WTC11 (cell line): ENCODE measurements at regions of chr3 and their contacts with region 1.

Region 1: GRCh38 chr3:128845778-128846485 is 33.5 kb upstream of the ACAD9 start:
- DNase-seq: peak; percentile 96
- ATAC-seq: peak; percentile 92
- H3K4me3 Mint-ChIP-seq: peak overlapping the region; percentile 60
- H3K27ac Mint-ChIP-seq: no peak overlapping the region; the same call in 1 of the 2 replicates
- H3K4me1 Mint-ChIP-seq: peaks cover 24% of the 10 kb centered on the region
- H3K27me3 Mint-ChIP-seq: peaks cover 12% of the 10 kb centered on the region
- CTCF ChIP-seq: peak; percentile 51; the same call in 1 of the 2 replicates

Region 2: DNA sequence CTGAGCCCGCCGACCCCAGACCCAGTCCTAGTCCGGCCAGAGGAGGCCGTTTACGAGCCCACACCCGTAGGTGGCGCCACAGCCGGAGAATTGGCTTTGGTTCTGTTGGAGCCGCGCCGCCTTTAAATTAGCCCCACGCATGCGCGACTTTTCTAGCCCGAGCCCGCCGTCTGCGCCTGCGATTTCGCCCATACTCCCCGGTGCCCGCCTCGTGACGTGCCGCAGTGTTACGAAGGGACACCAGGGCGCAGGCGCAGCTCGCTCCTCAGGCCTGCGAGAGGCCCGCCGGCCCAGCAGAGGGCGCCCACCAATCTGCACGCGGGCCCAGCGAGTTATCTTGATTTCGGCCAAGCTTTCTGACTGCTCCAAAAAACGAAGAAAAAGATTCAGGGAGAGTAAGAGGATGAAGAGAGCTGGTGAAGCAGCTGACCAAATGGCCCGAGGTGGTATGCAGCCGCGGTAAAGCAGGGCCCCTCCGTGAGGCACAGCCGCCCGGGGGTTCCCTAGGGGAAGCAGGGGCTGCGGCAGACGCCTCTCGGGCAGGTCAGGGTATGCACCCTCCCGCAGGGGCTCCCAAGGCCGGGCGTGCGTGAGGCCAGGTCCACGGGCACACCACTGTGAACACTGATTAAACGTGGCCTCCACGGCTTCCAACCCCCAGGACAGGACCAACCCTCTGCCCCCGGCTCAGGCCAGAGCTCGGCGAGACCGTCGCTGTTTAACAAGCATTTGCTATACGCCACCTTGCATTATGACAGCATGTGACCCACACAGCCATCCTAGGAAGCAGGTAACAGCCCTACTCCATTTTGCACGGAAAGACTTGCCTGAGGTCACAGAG is 228.2 kb before region 1 on chr3:
- CTCF ChIA-PET with region 1: interaction called, 15 read pairs
- POLR2A ChIA-PET with region 1: no interaction called
- DNase-seq: peak; percentile 98
- ATAC-seq: peak; percentile 91
- H3K4me3 Mint-ChIP-seq: peak overlapping the region; percentile 91
- H3K27ac Mint-ChIP-seq: peak overlapping the region; percentile 89
- H3K4me1 Mint-ChIP-seq: peaks cover 14% of the 10 kb centered on the region
- H3K27me3 Mint-ChIP-seq: no peaks in the 10 kb centered on the region
- CTCF ChIP-seq: peak; percentile 75; the same call in 1 of the 2 replicates

Region 3: GRCh38 chr3:128787256-128788240 is 58.4 kb before region 1 on chr3:
- CTCF ChIA-PET with region 1: interaction called, 10 read pairs
- POLR2A ChIA-PET with region 1: no interaction called
- DNase-seq: peak; percentile 50
- ATAC-seq: peak; percentile 70
- H3K4me3 Mint-ChIP-seq: no peak overlapping the region
- H3K27ac Mint-ChIP-seq: no peak overlapping the region; the same call in 1 of the 2 replicates
- H3K4me1 Mint-ChIP-seq: peaks cover 56% of the 10 kb centered on the region
- H3K27me3 Mint-ChIP-seq: no peaks in the 10 kb centered on the region
- CTCF ChIP-seq: peak; percentile 58

Region 4: DNA sequence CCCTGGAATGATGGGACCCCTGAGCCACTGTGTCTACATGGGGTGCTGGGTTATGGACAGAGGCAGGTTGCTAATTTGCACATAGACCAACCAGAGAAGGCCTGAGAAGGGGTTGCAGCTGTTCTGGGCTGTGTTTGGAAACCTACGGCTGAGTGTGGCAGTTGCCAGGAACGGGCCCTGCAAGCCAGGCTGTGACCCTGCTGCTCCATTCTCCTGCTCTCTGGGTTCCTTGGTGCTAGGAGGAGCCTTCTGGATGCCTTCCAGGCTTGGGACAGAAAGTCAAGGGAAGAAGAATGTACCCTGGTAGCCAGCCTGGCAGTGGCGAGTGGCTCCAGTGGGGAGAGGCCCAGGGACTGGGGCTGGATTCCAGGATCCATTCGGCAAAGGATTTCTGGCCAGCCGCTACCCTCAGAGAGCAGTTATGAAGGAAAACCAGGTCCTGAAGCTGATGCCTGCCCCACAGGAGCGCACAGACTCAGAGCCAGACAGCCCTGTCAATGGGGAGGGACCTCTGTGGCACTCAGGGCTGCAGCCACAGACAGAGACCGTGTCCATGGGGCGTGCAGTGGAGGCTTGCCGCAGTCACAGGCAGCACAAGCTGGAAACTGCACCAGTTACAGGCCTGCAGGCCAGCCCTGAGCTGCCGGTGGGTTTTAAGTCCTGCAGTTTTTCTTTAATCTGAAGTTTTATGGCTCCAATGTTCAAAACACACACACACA is 21.6 kb before region 1 on chr3:
- CTCF ChIA-PET with region 1: interaction called, 11 read pairs
- POLR2A ChIA-PET with region 1: no interaction called
- DNase-seq: no peak
- ATAC-seq: peak; percentile 16
- H3K4me3 Mint-ChIP-seq: no peak overlapping the region
- H3K27ac Mint-ChIP-seq: peak overlapping the region; percentile 76
- H3K4me1 Mint-ChIP-seq: no peaks in the 10 kb centered on the region
- H3K27me3 Mint-ChIP-seq: no peaks in the 10 kb centered on the region
- CTCF ChIP-seq: no peak